Dendritic cell treated with granulocyte-macrophage colony-stimulating factor and Interleukin-4, amounts not matched to agents 40 ng/mL and 50 ng/mL, for 4 days (primary cell): ENCODE measurements at regions of chr2 and their contacts with region 1.

Region 1: GRCh38 chr2:119826370-119826961 is 66.7 kb downstream of the PTPN4 start:
- H3K4me3 Mint-ChIP-seq: no peak overlapping the region
- H3K27ac Mint-ChIP-seq: no peak overlapping the region
- H3K4me1 Mint-ChIP-seq: no peaks in the 10 kb centered on the region
- H3K27me3 Mint-ChIP-seq: no peaks in the 10 kb centered on the region

Region 2: GRCh38 chr2:119702918-119703401 is 123.5 kb before region 1 on chr2:
- intact Hi-C with region 1: loop called (anchors 2 kb)
- H3K4me3 Mint-ChIP-seq: no peak overlapping the region
- H3K27ac Mint-ChIP-seq: no peak overlapping the region
- H3K4me1 Mint-ChIP-seq: peaks cover 14% of the 10 kb centered on the region
- H3K27me3 Mint-ChIP-seq: peaks cover 2% of the 10 kb centered on the region

Region 3: DNA sequence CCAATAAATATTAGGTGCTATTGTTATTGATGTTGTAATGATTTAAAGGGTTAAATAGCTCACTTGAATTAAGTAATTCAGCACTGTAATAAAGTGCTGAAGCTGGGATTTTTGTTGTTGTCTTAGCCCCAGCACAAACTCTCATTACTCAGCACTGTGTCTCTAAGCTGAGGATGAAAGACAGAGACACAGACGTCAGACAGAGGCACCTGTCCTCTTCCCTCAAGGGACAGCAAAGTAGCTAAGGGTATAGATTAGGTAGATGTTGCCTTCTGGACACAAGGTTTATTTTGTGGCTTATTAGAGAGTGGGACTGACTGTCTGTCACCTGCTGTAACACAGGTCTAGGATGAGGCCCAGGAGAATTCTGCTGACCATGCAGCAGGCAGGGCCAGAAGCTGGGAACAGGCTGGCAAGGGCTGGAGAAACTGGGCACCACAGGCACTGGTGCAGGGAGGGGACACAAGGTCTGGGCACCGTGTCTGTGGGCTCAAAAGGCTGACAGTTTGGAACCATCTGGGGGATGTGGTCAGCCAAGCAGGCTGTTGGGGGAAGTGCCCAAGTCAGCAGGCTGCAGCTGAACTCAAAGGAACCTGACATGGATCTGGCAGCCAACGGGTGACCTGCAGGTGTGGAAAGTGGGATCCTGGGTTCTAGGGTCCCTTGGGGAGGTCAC is 86.7 kb before region 1 on chr2:
- intact Hi-C with region 1: no loop called
- H3K4me3 Mint-ChIP-seq: no peak overlapping the region
- H3K27ac Mint-ChIP-seq: no peak overlapping the region
- H3K4me1 Mint-ChIP-seq: peaks cover 6% of the 10 kb centered on the region
- H3K27me3 Mint-ChIP-seq: no peaks in the 10 kb centered on the region

Region 4: GRCh38 chr2:119753041-119753929 is 73.2 kb before region 1 on chr2:
- intact Hi-C with region 1: loop called (anchors 1 kb)
- H3K4me3 Mint-ChIP-seq: no peak overlapping the region
- H3K27ac Mint-ChIP-seq: no peak overlapping the region
- H3K4me1 Mint-ChIP-seq: peaks cover 14% of the 10 kb centered on the region
- H3K27me3 Mint-ChIP-seq: no peaks in the 10 kb centered on the region